ENCODE measurements at regions of chr14 and their contacts with region 1.

Region 1: DNA sequence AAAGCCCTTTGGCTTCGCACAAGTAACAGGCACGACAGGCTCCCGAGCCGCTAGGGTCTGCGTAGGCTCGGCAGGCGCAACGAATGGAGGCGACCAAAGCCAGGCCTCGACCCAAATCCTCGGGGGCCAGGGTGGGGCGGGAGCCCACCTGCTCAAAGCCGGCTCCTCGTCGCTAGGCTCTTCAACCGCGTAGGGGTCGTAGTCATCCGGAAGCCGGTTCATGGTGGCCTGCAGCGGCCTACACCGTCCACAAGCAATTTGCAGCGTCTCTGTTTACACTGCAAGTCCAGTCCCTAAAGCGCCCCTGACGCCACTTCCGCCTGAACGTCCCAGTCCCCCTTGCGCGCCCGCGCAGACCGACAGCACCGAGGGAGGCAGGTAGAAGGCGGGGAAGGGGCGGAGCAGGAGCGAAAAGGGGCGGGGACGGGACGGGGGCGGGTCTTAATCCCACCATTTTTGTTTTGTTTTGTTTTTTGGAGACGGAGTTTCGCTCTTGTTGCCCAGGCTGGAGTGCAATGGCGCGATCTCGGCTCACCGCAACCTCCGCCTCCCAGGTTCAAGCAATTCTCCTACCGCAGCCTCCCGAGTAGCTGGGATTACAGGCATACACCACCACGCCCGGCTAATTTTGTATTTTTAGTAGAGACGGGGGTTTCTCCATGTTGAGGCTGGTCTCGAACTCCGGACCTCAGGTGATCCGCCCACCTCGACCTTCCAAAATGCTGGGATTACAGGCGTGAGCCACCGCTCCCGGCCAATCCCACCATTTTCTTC is at the start of gene EAPP:
- DNase-seq: peak; percentile 84 to 95 (median 91)
- ATAC-seq: peak; percentile 100
- H3K4me3 ChIP-seq: peak within 1 kb of the TSS; percentile 100
- H3K4me3 Mint-ChIP-seq: peak within 1 kb of the TSS; percentile 95 to 99 (median 99)
- H3K27ac ChIP-seq: peak within 1 kb of the TSS; percentile 97
- H3K27ac Mint-ChIP-seq: peak within 1 kb of the TSS; percentile 95 to 100 (median 99)
- H3K4me1 ChIP-seq: peaks cover 18 to 24% of the 10 kb centered on the region in 2 donors
- H3K4me1 Mint-ChIP-seq: peaks cover 5 to 45% (median 31%) of the 10 kb centered on the region in 7 donors
- H3K27me3 ChIP-seq: no peaks in the 10 kb centered on the region
- H3K27me3 Mint-ChIP-seq: no peaks in the 10 kb centered on the region
- total RNA-seq, gene EAPP: 34.8 to 84.3 (median 60.9) TPM

Region 2: DNA sequence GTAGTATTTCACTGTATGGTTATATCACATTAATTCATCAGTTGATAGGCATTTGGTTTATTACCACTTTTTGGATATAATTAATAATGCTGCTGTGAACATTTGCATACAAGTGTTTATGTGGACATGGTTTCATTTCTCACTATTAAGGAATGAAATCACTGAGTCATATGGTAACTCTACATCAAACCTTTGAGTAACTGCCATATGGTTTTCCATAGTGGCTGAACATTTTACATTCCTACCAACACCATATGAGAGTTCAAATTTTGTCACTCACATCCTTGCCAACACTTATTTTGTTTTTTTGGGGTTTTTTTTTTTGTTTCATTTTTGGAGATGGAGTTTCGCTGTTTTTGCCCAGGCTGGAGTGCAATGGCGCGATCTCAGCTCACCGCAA is 30.2 kb after region 1 on chr14:
- CTCF ChIA-PET with region 1: no interaction called
- POLR2A ChIA-PET with region 1: no interaction called
- intact Hi-C with region 1: loop called in 1 of 2 experiments (anchors 5 kb)
- DNase-seq: no peak
- ATAC-seq: no peak
- H3K4me3 ChIP-seq: no peak overlapping the region
- H3K4me3 Mint-ChIP-seq: no peak overlapping the region
- H3K27ac ChIP-seq: no peak overlapping the region
- H3K27ac Mint-ChIP-seq: peak overlapping the region in 2 of 9 donors; percentile 2 to 53
- H3K4me1 ChIP-seq: no peaks in the 10 kb centered on the region
- H3K4me1 Mint-ChIP-seq: no peaks in the 10 kb centered on the region
- H3K27me3 ChIP-seq: no peaks in the 10 kb centered on the region
- H3K27me3 Mint-ChIP-seq: no peaks in the 10 kb centered on the region

Region 3: GRCh38 chr14:34629657-34630529 is 90.3 kb after region 1 on chr14 and contains the start of gene SNX6:
- CTCF ChIA-PET with region 1: no interaction called
- POLR2A ChIA-PET with region 1: interaction called, 5 read pairs
- intact Hi-C with region 1: loop called in 1 of 2 experiments (anchors 5 kb)
- DNase-seq: peak; percentile 75 to 87 (median 83)
- ATAC-seq: peak; percentile 100
- H3K4me3 ChIP-seq: peak within 1 kb of the TSS; percentile 72
- H3K4me3 Mint-ChIP-seq: peak within 1 kb of the TSS; percentile 89 to 100 (median 98)
- H3K27ac ChIP-seq: peak within 1 kb of the TSS; percentile 98
- H3K27ac Mint-ChIP-seq: peak within 1 kb of the TSS; percentile 92 to 97 (median 96)
- H3K4me1 ChIP-seq: peaks cover 17 to 20% of the 10 kb centered on the region in 2 donors
- H3K4me1 Mint-ChIP-seq: peaks cover 6 to 49% (median 33%) of the 10 kb centered on the region in 7 donors
- H3K27me3 ChIP-seq: no peaks in the 10 kb centered on the region
- H3K27me3 Mint-ChIP-seq: peaks cover 0 to 18% (median 0%) of the 10 kb centered on the region in 5 donors
- total RNA-seq, gene SNX6: 56.6 to 78.9 (median 59.7) TPM

Measured in naive thymus-derived CD4-positive, alpha-beta T cell (primary cell).